ENCODE measurements at regions of chr16 and their contacts with region 1.

Region 1: GRCh38 chr16:53054670-53055485 is at the start of gene CHD9:
- DNase-seq: peak; percentile 52 to 79
- ATAC-seq: peak; percentile 88 to 89
- H3K4me3 ChIP-seq: peak within 1 kb of the TSS; percentile 80 to 91 (median 87)
- H3K27ac ChIP-seq: peak within 1 kb of the TSS; percentile 89 to 94 (median 92)
- H3K4me1 ChIP-seq: peaks cover 23 to 39% of the 10 kb centered on the region in 2 donors
- H3K27me3 ChIP-seq: no peaks in the 10 kb centered on the region
- CTCF ChIP-seq: peak; percentile 99 to 100 (median 99)
- POLR2A ChIP-seq: no peak
- total RNA-seq, gene CHD9: 24.5 to 84.0 (median 48.2) TPM

Region 2: DNA sequence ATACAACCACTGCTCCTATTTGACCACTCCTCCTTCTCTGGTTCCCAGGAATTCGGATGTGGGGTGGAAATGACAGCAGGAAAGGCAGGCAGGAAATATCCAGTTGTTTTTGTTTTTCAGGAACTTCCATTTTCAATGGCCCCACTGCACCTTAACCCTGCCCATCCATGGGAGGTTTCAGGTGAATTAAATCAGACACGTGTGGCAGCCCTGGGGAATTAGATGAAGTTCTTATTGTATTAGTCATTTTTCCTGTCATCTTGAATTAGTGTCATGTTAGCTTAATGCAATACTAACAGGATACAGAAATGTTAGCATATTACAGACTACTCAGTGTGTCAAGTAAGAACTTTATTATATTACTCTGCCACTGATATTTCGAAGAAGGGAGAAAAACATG is 148.6 kb before region 1 on chr16:
- in situ Hi-C with region 1: no loop called
- intact Hi-C with region 1: no loop called
- DNase-seq: no peak
- ATAC-seq: no peak
- H3K4me3 ChIP-seq: no peak overlapping the region
- H3K27ac ChIP-seq: no peak overlapping the region
- H3K4me1 ChIP-seq: no peaks in the 10 kb centered on the region
- H3K27me3 ChIP-seq: no peaks in the 10 kb centered on the region
- CTCF ChIP-seq: no peak
- POLR2A ChIP-seq: no peak

Region 3: DNA sequence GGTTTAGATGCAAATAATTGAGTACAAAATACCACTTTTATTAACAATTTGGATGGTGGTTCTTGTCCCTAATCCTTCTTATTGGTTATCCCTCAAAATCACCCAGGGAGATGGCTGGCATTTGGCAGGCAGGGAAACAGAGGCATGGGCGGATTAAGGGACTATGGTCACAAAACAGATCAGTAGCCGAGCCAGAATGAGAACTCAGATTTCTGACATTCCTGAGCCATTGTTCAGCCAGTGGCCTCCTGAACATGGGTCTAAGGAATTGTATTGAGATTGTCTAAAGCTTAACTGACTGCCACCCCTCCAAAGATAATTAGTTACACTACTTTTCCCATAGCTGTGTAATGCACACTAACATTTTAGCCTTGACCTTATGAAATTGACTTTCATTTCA is 90.6 kb before region 1 on chr16:
- in situ Hi-C with region 1: no loop called
- intact Hi-C with region 1: no loop called
- DNase-seq: no peak
- ATAC-seq: no peak
- H3K4me3 ChIP-seq: no peak overlapping the region
- H3K27ac ChIP-seq: no peak overlapping the region
- H3K4me1 ChIP-seq: no peaks in the 10 kb centered on the region
- H3K27me3 ChIP-seq: no peaks in the 10 kb centered on the region
- CTCF ChIP-seq: no peak
- POLR2A ChIP-seq: no peak

Region 4: GRCh38 chr16:53099318-53100130 is 44.6 kb after region 1 on chr16:
- in situ Hi-C with region 1: no loop called
- intact Hi-C with region 1: loop called (anchors 2 kb)
- DNase-seq: peak; percentile 94 to 99
- ATAC-seq: peak; percentile 85 to 91
- H3K4me3 ChIP-seq: peak overlapping the region; percentile 51 to 60 (median 54)
- H3K27ac ChIP-seq: peak overlapping the region; percentile 94 to 96 (median 95)
- H3K4me1 ChIP-seq: peaks cover 45% of the 10 kb centered on the region in 2 donors
- H3K27me3 ChIP-seq: no peaks in the 10 kb centered on the region
- CTCF ChIP-seq: no peak
- POLR2A ChIP-seq: peak in 1 of 2 donors; percentile 39

Region 5: DNA sequence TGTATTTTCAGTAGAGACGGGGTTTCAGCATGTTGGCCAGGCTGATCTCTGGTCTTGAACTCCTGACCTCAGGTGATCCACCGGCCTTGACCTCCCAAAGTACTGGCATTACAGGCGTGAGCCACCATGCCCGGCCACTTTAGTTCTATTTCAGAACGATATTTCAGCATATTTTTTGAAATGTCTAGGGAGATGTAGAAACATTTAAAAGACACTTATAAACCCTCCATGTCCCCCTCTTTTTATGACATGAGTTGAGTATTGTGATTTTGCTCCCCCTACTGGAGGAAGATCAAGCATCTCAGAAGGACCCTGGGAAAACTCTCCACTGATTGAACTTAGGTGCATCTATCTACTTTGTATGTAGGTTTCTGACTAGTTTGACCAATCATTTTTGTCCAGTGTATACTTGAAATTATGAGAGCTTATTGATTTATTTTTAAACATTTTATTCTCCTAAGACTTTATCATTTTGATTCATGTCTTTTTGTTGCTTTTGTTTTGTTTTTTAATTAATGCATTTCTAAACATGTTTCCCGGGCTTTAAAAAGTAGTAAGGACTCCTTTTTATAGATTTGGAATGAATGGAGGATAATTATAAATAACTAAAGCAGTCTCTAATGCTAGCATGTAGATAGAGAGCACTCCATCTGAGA is 105.0 kb after region 1 on chr16:
- in situ Hi-C with region 1: loop called (anchors 10 to 25 kb)
- intact Hi-C with region 1: loop called (anchors 1 kb)
- DNase-seq: no peak
- ATAC-seq: peak; percentile 62 to 74
- H3K4me3 ChIP-seq: no peak overlapping the region
- H3K27ac ChIP-seq: peak overlapping the region in 1 of 4 donors; percentile 23
- H3K4me1 ChIP-seq: peaks cover 9 to 10% of the 10 kb centered on the region in 2 donors
- H3K27me3 ChIP-seq: no peaks in the 10 kb centered on the region
- CTCF ChIP-seq: peak; percentile 41 to 71 (median 60)
- POLR2A ChIP-seq: no peak

Region 6: GRCh38 chr16:53220585-53220984 is 165.7 kb after region 1 on chr16:
- in situ Hi-C with region 1: no loop called
- intact Hi-C with region 1: loop called (anchors 5 kb)
- DNase-seq: no peak
- ATAC-seq: no peak
- H3K4me3 ChIP-seq: no peak overlapping the region
- H3K27ac ChIP-seq: peak overlapping the region; percentile 9 to 71 (median 60)
- H3K4me1 ChIP-seq: peaks cover 66% of the 10 kb centered on the region in 2 donors
- H3K27me3 ChIP-seq: no peaks in the 10 kb centered on the region
- CTCF ChIP-seq: peak in 2 of 5 experiments; percentile 11 to 38
- POLR2A ChIP-seq: no peak

Region 7: DNA sequence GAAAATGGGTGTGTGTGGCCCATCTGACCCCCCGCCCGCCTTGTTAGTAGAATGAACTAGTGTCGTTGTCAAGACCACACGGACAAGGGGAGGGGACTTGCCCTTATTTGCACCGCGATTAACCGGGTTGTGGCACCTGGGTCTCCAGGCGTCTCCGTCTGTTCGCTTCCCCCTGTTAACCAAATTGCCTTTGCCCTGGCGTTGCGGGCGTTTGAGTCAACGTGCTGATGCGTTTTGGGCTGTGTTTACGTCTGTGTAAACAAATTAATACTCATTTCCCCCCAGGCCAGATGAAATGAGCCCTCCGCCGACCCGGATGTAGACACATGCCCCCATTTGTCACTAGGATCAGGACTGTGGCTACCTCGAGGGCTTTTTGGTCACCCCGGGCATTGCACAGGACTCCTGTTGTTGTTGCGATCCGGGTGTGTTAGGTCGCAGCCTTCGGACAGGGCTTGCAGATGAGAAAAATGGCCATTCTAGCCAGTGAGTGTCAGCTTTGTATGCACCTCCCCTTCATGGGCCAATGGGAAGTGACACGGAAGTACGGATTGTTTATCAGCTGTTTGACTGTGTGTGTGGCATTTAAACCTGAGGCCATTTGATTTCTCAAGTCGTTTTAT is 380.3 kb after region 1 on chr16:
- in situ Hi-C with region 1: no loop called
- intact Hi-C with region 1: loop called (anchors 10 kb)
- DNase-seq: peak; percentile 85 to 89
- ATAC-seq: peak; percentile 93 to 97
- H3K4me3 ChIP-seq: peak overlapping the region; percentile 94 to 100 (median 98)
- H3K27ac ChIP-seq: peak overlapping the region; percentile 96 to 99 (median 98)
- H3K4me1 ChIP-seq: peaks cover 18 to 20% of the 10 kb centered on the region in 2 donors
- H3K27me3 ChIP-seq: no peaks in the 10 kb centered on the region
- CTCF ChIP-seq: no peak
- POLR2A ChIP-seq: peak; percentile 56 to 85

Measured in gastrocnemius medialis (tissue), 4 donors.